B cell (primary cell): ENCODE measurements at regions of chr5 and their contacts with region 1.

Region 1: DNA sequence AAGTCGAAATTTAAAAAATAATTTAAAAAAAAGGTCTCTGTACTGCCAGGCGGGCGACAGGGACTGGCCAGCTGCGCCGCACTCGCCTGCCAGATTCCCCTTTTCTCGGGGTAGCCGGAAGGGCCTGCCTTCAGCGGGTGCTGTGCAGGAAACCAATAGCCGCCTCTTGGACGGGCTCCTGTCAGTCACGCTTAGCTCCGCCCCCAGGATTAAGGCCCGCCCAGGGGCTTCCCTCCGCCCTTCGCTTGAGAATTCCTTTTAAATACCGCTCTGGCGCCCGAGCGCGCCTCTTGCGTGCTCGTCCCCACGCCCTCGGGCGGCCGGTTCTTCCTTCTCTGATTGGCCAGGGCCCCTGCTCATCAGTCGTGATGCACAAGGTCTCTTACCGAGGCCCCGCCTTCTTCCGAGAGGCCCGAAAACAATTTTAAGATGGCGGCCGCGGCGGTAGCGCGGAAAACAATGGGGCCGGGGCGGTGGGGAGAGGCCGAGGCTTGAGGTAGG is at the start of gene MAML1:
- DNase-seq: peak; percentile 100
- ATAC-seq: peak; percentile 94
- H3K4me3 ChIP-seq: peak within 1 kb of the TSS; percentile 61 to 93 (median 74)
- H3K4me3 Mint-ChIP-seq: peak within 1 kb of the TSS; percentile 89
- H3K27ac ChIP-seq: peak within 1 kb of the TSS; percentile 50 to 89
- H3K27ac Mint-ChIP-seq: peak within 1 kb of the TSS; percentile 95
- H3K4me1 ChIP-seq: peaks cover 19 to 23% of the 10 kb centered on the region in 2 donors
- H3K4me1 Mint-ChIP-seq: peaks cover 36% of the 10 kb centered on the region
- H3K27me3 ChIP-seq: no peaks in the 10 kb centered on the region
- H3K27me3 Mint-ChIP-seq: no peaks in the 10 kb centered on the region
- CTCF ChIP-seq: no peak
- total RNA-seq, gene MAML1: 50.6 and 57.6 TPM in 2 replicates

Region 2: DNA sequence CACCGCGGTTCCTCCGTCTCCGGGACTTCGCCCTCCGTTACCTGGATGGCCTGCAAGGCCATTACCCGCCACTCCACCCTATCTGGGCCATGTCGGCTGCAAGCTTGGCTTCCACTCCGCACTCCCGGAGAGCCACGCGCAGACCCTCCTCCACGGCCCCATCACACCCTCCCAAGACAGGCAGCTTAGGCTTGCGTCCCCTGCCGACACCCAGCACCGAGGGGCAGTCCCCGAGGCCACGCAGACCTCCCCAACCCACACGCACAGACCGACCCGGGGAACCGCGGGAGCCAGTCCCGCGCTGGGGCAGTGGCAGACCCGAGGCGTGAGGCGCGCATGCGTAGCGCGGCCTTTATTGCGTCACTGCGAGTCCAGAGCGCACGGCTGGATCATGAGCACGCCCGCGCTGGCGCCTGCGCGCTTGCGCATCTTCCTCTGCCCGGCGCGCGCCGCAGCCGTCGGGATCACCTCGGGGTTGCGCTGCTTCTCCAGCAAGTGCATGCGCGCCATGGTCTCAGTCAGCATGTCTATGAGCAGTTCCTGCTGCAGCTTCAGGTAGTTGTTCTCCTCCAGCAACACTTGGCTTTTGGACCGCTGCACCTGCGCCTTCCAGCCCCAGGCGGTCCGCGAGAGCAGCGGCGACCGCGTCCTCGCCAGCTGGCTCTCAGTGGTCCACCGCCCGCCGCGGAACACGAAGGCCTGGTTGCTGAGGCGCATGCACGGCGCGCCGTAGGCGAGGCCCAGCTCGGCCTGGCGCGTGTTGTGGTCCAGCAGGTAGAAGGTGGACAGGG is 54.0 kb before region 1 on chr5:
- CTCF ChIA-PET with region 1: interaction called, 3 read pairs
- POLR2A ChIA-PET with region 1: interaction called, 3 read pairs
- intact Hi-C with region 1: loop called (anchors 1 kb)
- DNase-seq: peak; percentile 97
- ATAC-seq: peak; percentile 91
- H3K4me3 ChIP-seq: peak overlapping the region; percentile 48 to 90 (median 75)
- H3K4me3 Mint-ChIP-seq: peak overlapping the region; percentile 98
- H3K27ac ChIP-seq: peak overlapping the region; percentile 74 to 86
- H3K27ac Mint-ChIP-seq: peak overlapping the region; percentile 97
- H3K4me1 ChIP-seq: peaks cover 7 to 19% of the 10 kb centered on the region in 2 donors
- H3K4me1 Mint-ChIP-seq: peaks cover 25% of the 10 kb centered on the region
- H3K27me3 ChIP-seq: no peaks in the 10 kb centered on the region
- H3K27me3 Mint-ChIP-seq: no peaks in the 10 kb centered on the region
- CTCF ChIP-seq: peak; percentile 26

Region 3: DNA sequence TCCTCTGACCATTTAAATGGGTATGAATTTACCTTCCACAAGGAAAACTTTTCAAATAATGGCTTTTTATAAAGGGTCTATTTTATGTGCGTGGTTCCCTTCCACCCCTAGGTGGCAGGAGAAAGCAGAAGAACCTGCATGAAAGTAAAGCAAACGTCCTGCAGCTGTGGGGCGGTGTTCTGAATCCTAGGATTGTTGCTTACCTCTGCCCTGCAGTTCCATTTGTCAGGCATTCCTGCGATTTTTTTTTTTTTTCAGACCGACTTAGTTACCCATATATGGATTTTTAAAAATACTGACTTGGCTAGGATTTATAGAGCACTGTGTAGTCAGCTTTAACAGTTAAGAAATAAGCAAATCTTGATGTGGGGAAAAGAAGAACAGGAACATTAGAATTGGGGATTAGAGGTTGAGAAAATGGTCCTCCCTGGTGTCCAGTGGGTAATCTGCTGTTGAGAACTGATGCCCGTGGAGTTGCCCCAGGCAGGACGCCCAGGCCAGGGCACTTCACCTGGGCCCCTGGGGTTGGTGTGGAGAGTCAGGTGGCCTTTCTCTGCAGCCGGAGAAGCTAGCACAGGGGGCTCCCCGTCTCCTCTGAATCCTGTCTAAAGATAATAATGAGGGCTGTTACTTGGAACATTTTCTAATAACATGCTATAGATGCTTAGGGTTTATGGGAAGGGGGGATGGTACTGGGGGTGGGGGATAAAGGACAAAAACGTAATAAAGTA is 30.9 kb after region 1 on chr5:
- CTCF ChIA-PET with region 1: interaction called, 5 read pairs
- POLR2A ChIA-PET with region 1: interaction called, 8 read pairs
- intact Hi-C with region 1: loop called (anchors 2 kb)
- DNase-seq: peak; percentile 71
- ATAC-seq: peak; percentile 62
- H3K4me3 ChIP-seq: no peak overlapping the region
- H3K4me3 Mint-ChIP-seq: no peak overlapping the region
- H3K27ac ChIP-seq: no peak overlapping the region
- H3K27ac Mint-ChIP-seq: no peak overlapping the region
- H3K4me1 ChIP-seq: peaks cover 17 to 32% of the 10 kb centered on the region in 2 donors
- H3K4me1 Mint-ChIP-seq: peaks cover 45% of the 10 kb centered on the region
- H3K27me3 ChIP-seq: no peaks in the 10 kb centered on the region
- H3K27me3 Mint-ChIP-seq: no peaks in the 10 kb centered on the region
- CTCF ChIP-seq: peak; percentile 96

Region 4: GRCh38 chr5:179821581-179822432 is 89.3 kb after region 1 on chr5:
- CTCF ChIA-PET with region 1: no interaction called
- POLR2A ChIA-PET with region 1: interaction called, 10 read pairs
- intact Hi-C with region 1: loop called (anchors 1 kb)
- DNase-seq: peak; percentile 89
- ATAC-seq: peak; percentile 48
- H3K4me3 ChIP-seq: peak overlapping the region; percentile 22 to 94 (median 81)
- H3K4me3 Mint-ChIP-seq: peak overlapping the region; percentile 98
- H3K27ac ChIP-seq: peak overlapping the region; percentile 91 to 98
- H3K27ac Mint-ChIP-seq: peak overlapping the region; percentile 98
- H3K4me1 ChIP-seq: peaks cover 36 to 47% of the 10 kb centered on the region in 2 donors
- H3K4me1 Mint-ChIP-seq: peaks cover 55% of the 10 kb centered on the region
- H3K27me3 ChIP-seq: peaks cover 0 to 4% (median 0%) of the 10 kb centered on the region in 4 experiments
- H3K27me3 Mint-ChIP-seq: no peaks in the 10 kb centered on the region
- CTCF ChIP-seq: no peak

Region 5: DNA sequence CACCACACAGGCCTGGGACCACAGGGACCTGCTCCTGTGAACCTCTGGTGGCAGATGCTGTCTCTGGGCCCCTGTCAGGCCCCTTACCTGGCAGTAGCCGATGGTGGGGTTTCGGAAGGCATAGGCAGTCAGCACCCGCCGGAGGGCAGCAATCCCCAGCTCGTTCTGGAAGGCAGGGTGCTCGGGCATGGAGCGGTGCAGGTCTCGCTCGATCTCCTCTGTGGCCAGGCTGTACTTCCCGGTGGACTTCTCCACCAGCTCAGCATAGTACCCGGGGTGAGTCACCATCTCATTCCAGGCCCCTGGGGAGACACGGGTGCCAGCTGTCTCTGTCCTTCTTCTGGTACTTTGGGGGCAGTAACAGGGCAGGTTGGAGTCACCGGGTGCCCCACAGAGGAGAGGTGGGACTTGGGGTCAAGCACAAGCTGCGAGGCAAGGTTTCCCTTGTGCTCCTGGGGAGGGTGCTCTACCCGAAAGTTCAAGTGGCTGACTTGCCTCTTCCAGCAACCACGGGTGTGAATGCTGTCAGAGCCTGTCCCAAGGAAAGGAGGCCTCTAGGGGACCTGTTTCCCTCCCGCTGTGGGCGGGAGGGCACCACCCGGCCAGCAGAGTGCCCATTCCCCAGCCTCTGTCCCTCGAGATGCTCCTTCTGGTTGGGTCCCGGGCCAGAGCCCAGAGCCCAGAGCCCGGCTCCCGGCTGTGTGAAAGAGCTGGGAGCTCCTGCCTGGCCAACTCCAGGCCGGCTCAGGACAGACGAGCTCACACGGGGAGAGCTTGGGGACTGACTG is 145.9 kb after region 1 on chr5:
- CTCF ChIA-PET with region 1: no interaction called
- POLR2A ChIA-PET with region 1: no interaction called
- intact Hi-C with region 1: no loop called
- DNase-seq: no peak
- ATAC-seq: no peak
- H3K4me3 ChIP-seq: no peak overlapping the region
- H3K4me3 Mint-ChIP-seq: no peak overlapping the region
- H3K27ac ChIP-seq: no peak overlapping the region
- H3K27ac Mint-ChIP-seq: no peak overlapping the region
- H3K4me1 ChIP-seq: no peaks in the 10 kb centered on the region
- H3K4me1 Mint-ChIP-seq: no peaks in the 10 kb centered on the region
- H3K27me3 ChIP-seq: no peaks in the 10 kb centered on the region
- H3K27me3 Mint-ChIP-seq: no peaks in the 10 kb centered on the region
- CTCF ChIP-seq: no peak

Region 6: GRCh38 chr5:179907570-179908324 is 175.3 kb after region 1 on chr5 and contains the start of gene TBC1D9B:
- CTCF ChIA-PET with region 1: no interaction called
- POLR2A ChIA-PET with region 1: no interaction called
- intact Hi-C with region 1: loop called (anchors 1 kb)
- DNase-seq: peak; percentile 88
- ATAC-seq: peak; percentile 88
- H3K4me3 ChIP-seq: peak within 1 kb of the TSS; percentile 47 to 61 (median 59)
- H3K4me3 Mint-ChIP-seq: peak within 1 kb of the TSS; percentile 92
- H3K27ac ChIP-seq: peak within 1 kb of the TSS in 1 of 2 donors; percentile 16
- H3K27ac Mint-ChIP-seq: peak within 1 kb of the TSS; percentile 94
- H3K4me1 ChIP-seq: peaks cover 13 to 24% of the 10 kb centered on the region in 2 donors
- H3K4me1 Mint-ChIP-seq: peaks cover 19% of the 10 kb centered on the region
- H3K27me3 ChIP-seq: no peaks in the 10 kb centered on the region
- H3K27me3 Mint-ChIP-seq: no peaks in the 10 kb centered on the region
- CTCF ChIP-seq: no peak
- total RNA-seq, gene TBC1D9B: 144 and 149 TPM in 2 replicates

Region 7: GRCh38 chr5:180071531-180072255 is 339.2 kb after region 1 on chr5 and contains the start of gene RNF130:
- CTCF ChIA-PET with region 1: no interaction called
- POLR2A ChIA-PET with region 1: no interaction called
- intact Hi-C with region 1: loop called (anchors 1 kb)
- DNase-seq: peak; percentile 90
- ATAC-seq: peak; percentile 75
- H3K4me3 ChIP-seq: peak within 1 kb of the TSS; percentile 66 to 85 (median 79)
- H3K4me3 Mint-ChIP-seq: peak within 1 kb of the TSS; percentile 89
- H3K27ac ChIP-seq: peak within 1 kb of the TSS; percentile 64 to 73
- H3K27ac Mint-ChIP-seq: peak within 1 kb of the TSS; percentile 84
- H3K4me1 ChIP-seq: peaks cover 25 to 30% of the 10 kb centered on the region in 2 donors
- H3K4me1 Mint-ChIP-seq: peaks cover 32% of the 10 kb centered on the region
- H3K27me3 ChIP-seq: no peaks in the 10 kb centered on the region
- H3K27me3 Mint-ChIP-seq: peaks cover 7% of the 10 kb centered on the region
- CTCF ChIP-seq: no peak
- total RNA-seq, gene RNF130: 25.8 and 28.4 TPM in 2 replicates

Region 8: DNA sequence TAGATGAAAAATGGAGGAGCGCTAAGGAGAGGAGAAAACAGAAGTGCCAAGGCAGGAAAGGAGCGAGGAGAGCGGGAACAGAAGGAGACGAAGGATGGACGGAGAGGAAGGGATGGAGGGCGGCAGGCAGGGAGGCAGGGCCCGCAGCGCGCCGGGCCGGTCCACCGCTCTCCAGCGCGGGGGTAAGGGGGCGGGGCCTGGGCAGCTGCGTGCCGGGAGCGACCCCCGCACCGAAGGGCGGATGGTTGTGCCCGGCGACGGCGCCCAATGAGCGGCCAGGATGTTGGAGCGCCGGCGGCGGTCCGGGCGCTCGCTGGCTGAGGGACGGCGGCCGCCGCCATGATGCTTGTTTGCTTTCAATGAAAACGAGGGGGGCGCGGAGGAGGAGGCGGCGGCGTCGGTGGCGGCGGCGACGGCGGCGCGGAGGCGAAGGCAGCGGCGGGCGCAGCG is 761.6 kb after region 1 on chr5 and contains the start of gene CNOT6:
- CTCF ChIA-PET with region 1: no interaction called
- POLR2A ChIA-PET with region 1: no interaction called
- intact Hi-C with region 1: loop called (anchors 5 kb)
- DNase-seq: peak; percentile 97
- ATAC-seq: peak; percentile 92
- H3K4me3 ChIP-seq: peak within 1 kb of the TSS; percentile 63 to 84 (median 81)
- H3K4me3 Mint-ChIP-seq: peak within 1 kb of the TSS; percentile 92
- H3K27ac ChIP-seq: peak within 1 kb of the TSS; percentile 72 to 85
- H3K27ac Mint-ChIP-seq: peak within 1 kb of the TSS; percentile 99
- H3K4me1 ChIP-seq: peaks cover 18 to 19% of the 10 kb centered on the region in 2 donors
- H3K4me1 Mint-ChIP-seq: peaks cover 30% of the 10 kb centered on the region
- H3K27me3 ChIP-seq: no peaks in the 10 kb centered on the region
- H3K27me3 Mint-ChIP-seq: no peaks in the 10 kb centered on the region
- CTCF ChIP-seq: no peak
- total RNA-seq, gene CNOT6: 31.1 and 31.4 TPM in 2 replicates